Mammary epithelial cell (primary cell): ENCODE measurements at regions of chr17 and their contacts with region 1.

Region 1: DNA sequence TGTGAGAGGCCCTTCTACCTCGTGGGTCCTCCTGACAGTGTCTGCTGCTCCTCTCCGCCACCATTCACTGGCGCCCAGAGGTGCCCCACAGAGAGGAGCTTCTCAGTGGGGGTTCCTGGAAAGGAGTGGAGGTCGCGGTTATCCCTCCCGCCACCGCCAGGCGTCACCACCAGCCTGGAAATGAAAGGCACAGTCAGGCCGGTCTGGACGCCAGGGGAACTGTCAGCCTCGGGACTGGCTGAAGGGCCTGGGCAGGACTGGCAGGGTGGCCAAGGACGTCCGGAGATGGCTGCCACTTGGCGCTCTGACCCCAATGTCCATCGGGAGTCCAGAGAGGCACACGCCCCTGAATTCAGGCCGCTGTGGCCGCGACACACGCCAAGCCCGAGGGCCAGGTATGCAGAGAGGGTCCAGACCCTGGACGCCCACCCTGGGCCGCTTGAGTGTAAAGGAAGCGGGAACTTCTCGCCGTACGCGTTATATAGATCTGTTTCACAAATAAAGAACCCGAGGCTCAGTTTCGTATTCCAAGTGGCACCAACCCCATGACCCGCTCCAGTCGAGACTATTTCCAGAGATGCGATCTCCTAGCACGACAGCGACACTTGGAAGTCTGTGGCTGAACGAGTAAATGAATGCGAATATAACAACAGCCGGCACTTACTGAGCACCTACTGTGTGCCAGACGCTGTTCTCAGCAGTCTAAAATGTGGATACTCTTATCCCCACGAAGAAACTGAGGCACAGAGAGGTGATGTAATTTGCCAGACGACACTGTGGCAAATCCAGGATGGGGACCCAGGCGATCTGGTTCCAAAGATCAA is 7.6 kb upstream of the NXPH3 start:
- DNase-seq: peak; percentile 60
- H3K4me3 ChIP-seq: peak overlapping the region in 2 of 3 experiments; percentile 30 to 50
- H3K27ac ChIP-seq: no peak overlapping the region
- H3K4me1 ChIP-seq: peaks cover 21% of the 10 kb centered on the region
- H3K27me3 ChIP-seq: no peaks in the 10 kb centered on the region
- CTCF ChIP-seq: peak; percentile 85 to 93

Region 2: GRCh38 chr17:49646391-49647255 is 78.5 kb after region 1 on chr17:
- CTCF ChIA-PET with region 1: interaction called, 16 read pairs
- dilution Hi-C with region 1: no loop called
- in situ Hi-C with region 1: no loop called
- intact Hi-C with region 1: no loop called
- DNase-seq: peak; percentile 85
- H3K4me3 ChIP-seq: peak overlapping the region; percentile 26 to 39 (median 37)
- H3K27ac ChIP-seq: peak overlapping the region; percentile 62
- H3K4me1 ChIP-seq: peaks cover 32% of the 10 kb centered on the region
- H3K27me3 ChIP-seq: no peaks in the 10 kb centered on the region
- CTCF ChIP-seq: no peak

Region 3: DNA sequence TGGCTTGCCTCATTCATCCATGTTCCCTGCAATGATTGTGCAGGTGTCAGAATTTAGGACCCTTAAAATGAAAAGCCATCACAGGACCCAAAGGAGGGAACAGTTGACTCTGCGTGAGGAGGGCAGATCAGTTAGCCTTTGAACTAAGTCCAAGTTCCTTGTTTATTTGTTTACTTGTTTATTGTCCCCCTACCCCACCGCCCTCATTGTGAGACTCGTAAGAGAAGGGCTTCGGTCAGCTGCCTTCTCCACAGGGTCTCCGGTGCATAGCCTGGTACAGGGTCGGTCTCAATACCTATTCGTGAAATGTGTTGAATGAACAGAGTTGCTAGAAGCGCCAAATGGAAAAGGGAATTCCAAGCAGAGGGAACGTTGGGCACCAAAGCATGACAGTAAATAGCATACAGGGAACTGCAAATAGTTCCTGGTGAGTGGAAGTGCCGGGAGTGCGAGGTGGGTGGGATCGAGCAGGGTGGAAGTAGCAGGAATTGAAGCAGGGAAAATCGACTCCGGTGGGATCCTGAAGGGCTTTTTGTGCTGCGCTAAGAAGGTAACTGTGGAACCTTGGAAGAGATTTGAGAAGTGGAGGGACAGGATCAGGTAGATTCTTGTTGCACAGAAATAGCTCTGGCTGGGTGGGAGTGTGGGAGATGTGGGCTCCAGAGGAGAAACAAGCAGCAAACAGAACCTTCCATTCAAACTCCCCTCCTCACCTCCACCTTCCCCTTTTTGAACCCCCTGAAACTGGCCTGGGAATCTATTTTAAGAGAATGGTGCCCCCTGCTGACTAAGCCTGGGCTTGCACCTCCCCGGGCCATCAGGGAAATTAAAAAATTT is 127.0 kb after region 1 on chr17:
- CTCF ChIA-PET with region 1: interaction called, 6 read pairs
- dilution Hi-C with region 1: no loop called
- in situ Hi-C with region 1: loop called (anchors 5 kb)
- intact Hi-C with region 1: loop called (anchors 1 kb)
- DNase-seq: no peak
- H3K4me3 ChIP-seq: no peak overlapping the region
- H3K27ac ChIP-seq: no peak overlapping the region
- H3K4me1 ChIP-seq: no peaks in the 10 kb centered on the region
- H3K27me3 ChIP-seq: no peaks in the 10 kb centered on the region
- CTCF ChIP-seq: peak; percentile 85 to 92

Region 4: GRCh38 chr17:49779739-49780231 is 211.7 kb after region 1 on chr17:
- CTCF ChIA-PET with region 1: no interaction called
- dilution Hi-C with region 1: no loop called
- in situ Hi-C with region 1: no loop called
- intact Hi-C with region 1: loop called (anchors 2 kb)
- DNase-seq: peak; percentile 81
- H3K4me3 ChIP-seq: no peak overlapping the region
- H3K27ac ChIP-seq: no peak overlapping the region
- H3K4me1 ChIP-seq: peaks cover 15% of the 10 kb centered on the region
- H3K27me3 ChIP-seq: no peaks in the 10 kb centered on the region
- CTCF ChIP-seq: peak; percentile 53 to 78

Region 5: GRCh38 chr17:49851387-49852291 is 283.6 kb after region 1 on chr17:
- CTCF ChIA-PET with region 1: no interaction called
- dilution Hi-C with region 1: no loop called
- in situ Hi-C with region 1: loop called in 1 of 2 experiments (anchors 10 kb)
- intact Hi-C with region 1: no loop called
- DNase-seq: no peak
- H3K4me3 ChIP-seq: peak overlapping the region; percentile 29 to 44 (median 41)
- H3K27ac ChIP-seq: no peak overlapping the region
- H3K4me1 ChIP-seq: peaks cover 9% of the 10 kb centered on the region
- H3K27me3 ChIP-seq: peaks cover 6% of the 10 kb centered on the region
- CTCF ChIP-seq: peak; percentile 23 to 36